Activated T-helper 1 cell treated with anti-CD3 and anti-CD28 coated beads, Interleukin-12 subunit alpha, Interleukin-12 subunit beta, Interleukin-2, Interleukin-4 antibody, amounts not matched to agents 30 ng/mL and 10 ng/mL and 1 ng/mL, durations not matched to agents 14 hours and 24 hours and 36 hours (primary cell): ENCODE measurements at regions of chr21 and their contacts with region 1.

Region 1: DNA sequence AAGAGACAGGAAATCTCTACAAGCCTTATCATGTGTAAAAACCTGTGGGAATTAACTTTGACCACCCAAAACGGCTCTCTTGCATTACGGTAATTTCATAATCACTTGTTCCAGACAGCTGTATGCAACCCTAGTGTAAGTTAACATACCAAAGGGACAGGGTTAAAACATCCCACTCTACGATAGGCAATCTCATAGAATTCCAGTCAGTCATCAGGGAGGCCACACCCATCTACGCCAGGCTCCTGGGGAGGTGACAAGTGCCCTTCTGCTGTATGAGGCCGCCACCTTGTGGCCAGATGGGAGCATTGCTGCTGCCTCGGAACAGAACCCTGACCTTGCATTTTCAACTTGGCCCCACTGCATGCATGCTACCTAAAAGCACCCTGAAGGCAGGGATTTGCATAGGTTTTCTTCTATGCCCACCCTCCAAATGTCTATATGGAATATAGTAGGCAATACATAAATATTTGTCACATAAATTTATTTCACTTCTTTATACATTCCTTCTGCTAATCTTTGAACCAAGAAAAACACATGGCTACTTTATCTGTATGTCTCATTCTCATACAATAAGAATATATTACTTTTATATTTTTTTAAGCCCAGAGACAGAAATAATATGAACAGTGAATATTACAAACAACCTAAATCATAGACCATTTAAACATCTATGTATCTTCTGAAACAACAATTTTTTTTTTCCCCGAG is 12.6 kb downstream of the HSF2BP start:
- DNase-seq: peak; percentile 77
- H3K4me3 Mint-ChIP-seq: peak overlapping the region; percentile 39
- H3K27ac Mint-ChIP-seq: peak overlapping the region; percentile 40
- H3K4me1 Mint-ChIP-seq: peaks cover 19% of the 10 kb centered on the region
- H3K27me3 Mint-ChIP-seq: peaks cover 13% of the 10 kb centered on the region

Region 2: GRCh38 chr21:42923541-42924432 is 722.9 kb before region 1 on chr21:
- intact Hi-C with region 1: loop called (anchors 1 kb)
- DNase-seq: peak; percentile 74
- H3K4me3 Mint-ChIP-seq: peak overlapping the region; percentile 35
- H3K27ac Mint-ChIP-seq: peak overlapping the region; percentile 67
- H3K4me1 Mint-ChIP-seq: peaks cover 16% of the 10 kb centered on the region
- H3K27me3 Mint-ChIP-seq: no peaks in the 10 kb centered on the region

Region 3: DNA sequence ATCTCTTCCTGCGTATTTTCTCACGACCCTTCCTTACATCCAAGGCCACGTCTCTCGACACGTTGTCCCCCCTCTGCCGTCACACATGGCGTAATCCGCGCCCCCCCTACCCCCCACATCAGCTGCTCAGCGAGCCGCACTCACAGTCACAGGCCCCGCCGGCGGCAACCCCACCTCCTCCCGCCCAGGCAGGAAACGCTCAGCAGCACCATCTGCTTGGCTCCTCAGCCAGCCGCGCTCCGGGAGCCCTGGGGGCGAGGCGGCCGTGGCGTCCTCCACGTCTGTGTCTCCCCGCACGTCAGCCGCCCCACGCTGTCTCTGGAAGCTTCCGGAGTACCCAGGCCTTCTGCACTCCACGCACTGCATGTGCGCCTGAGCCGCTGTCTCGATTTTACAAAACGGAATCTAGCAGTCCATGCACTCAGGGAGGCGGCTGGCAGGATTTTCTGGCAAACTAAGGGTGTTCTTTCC is 284.3 kb before region 1 on chr21:
- intact Hi-C with region 1: loop called (anchors 10 kb)
- DNase-seq: peak; percentile 73
- H3K4me3 Mint-ChIP-seq: peak overlapping the region; percentile 83
- H3K27ac Mint-ChIP-seq: peak overlapping the region; percentile 91
- H3K4me1 Mint-ChIP-seq: peaks cover 24% of the 10 kb centered on the region
- H3K27me3 Mint-ChIP-seq: peaks cover 5% of the 10 kb centered on the region

Region 4: GRCh38 chr21:43585924-43586424 is 60.7 kb before region 1 on chr21:
- intact Hi-C with region 1: no loop called
- DNase-seq: no peak
- H3K4me3 Mint-ChIP-seq: no peak overlapping the region
- H3K27ac Mint-ChIP-seq: no peak overlapping the region
- H3K4me1 Mint-ChIP-seq: no peaks in the 10 kb centered on the region
- H3K27me3 Mint-ChIP-seq: peaks cover 10% of the 10 kb centered on the region

Region 5: DNA sequence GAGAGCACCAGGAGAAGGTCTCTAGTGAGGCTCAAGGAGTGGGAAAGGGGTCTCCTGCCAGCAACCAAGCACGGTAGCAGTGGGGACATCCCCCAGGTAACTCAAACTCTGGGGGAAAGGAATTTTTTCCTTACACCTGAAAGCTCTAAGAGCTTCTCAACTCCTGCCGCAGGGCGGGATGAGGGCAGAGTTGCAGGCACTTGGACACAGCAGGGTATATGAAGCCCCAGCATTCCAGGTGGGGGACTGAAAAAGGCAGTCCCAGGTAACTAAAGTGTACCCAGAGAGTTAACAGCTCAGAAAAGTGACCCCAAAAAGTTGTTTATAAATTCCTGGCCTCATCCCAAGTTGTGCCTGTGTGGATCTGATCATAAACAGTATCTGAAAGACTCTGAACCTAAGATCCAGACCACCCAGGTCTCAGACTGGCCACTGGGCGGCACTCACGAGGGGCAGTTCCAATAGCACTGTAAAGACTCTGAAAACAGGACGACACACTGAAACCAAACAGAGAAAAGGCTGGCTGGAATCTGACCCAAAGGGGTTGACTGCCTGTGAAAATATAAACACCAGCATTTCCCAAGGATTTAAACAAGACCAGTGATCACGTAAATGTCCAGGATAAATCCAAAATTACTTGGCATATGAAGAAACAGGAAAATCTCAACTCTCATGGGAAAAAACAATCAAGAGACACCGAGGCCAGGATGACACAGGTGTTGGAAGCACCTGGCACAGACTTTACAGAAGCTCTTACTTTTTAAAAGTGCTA is 34.9 kb before region 1 on chr21:
- intact Hi-C with region 1: loop called (anchors 2 kb)
- DNase-seq: no peak
- H3K4me3 Mint-ChIP-seq: no peak overlapping the region
- H3K27ac Mint-ChIP-seq: no peak overlapping the region
- H3K4me1 Mint-ChIP-seq: peaks cover 9% of the 10 kb centered on the region
- H3K27me3 Mint-ChIP-seq: peaks cover 7% of the 10 kb centered on the region

Region 6: DNA sequence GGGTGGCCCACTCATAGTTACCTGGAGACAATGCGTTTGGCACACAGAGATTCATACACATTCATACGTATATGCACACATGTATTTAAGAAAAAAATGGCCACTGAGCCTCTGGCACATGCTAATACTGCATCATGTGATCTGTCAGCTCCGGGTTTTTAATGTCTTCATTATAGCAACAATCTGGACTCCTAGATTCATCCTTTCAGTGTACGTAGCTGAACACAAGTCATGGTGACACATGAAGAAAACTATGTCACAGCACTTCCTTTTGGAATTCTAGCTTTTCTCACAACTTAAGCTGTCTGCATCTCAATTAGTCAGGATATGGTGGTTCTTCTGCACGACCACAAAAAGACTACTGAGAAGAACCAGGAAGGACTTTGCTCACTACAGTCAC is 12.1 kb before region 1 on chr21:
- intact Hi-C with region 1: no loop called
- DNase-seq: no peak
- H3K4me3 Mint-ChIP-seq: no peak overlapping the region
- H3K27ac Mint-ChIP-seq: no peak overlapping the region
- H3K4me1 Mint-ChIP-seq: no peaks in the 10 kb centered on the region
- H3K27me3 Mint-ChIP-seq: peaks cover 11% of the 10 kb centered on the region